ENCODE measurements at regions of chr14 and their contacts with region 1.

Region 1: GRCh38 chr14:25537846-25538455 is 488.0 kb upstream of the STXBP6 start:
- DNase-seq: peak; percentile 31 to 75
- H3K4me3 ChIP-seq: no peak overlapping the region
- H3K27ac ChIP-seq: no peak overlapping the region
- H3K4me1 ChIP-seq: no peaks in the 10 kb centered on the region
- H3K27me3 ChIP-seq: no peaks in the 10 kb centered on the region
- CTCF ChIP-seq: peak; percentile 34 to 81 (median 73)
- EP300 ChIP-seq: no peak
- POLR2A ChIP-seq: no peak
- RAD21 ChIP-seq: peak; percentile 78 to 87

Region 2: DNA sequence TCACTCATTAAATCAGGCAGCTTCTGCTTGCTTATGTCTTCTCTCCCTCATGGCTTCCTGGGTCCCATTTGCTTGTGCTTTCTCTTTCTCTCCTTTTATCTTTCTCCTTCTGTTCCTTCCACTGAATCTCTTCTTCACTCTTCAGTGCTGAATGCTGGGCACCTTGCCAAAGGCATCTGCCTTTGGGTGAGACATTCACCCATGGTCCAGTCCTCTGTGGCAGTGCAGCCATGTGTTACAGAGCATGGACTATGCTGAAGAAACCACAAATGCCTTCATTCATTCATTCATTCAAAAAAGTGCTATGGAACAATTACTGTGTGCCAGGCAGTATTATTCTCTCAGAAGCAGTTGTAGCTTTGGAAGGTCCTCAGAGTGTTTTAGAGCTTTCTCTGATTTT is 143.6 kb before region 1 on chr14:
- CTCF ChIA-PET with region 1: no interaction called
- POLR2A ChIA-PET with region 1: no interaction called
- DNase-seq: no peak
- H3K4me3 ChIP-seq: no peak overlapping the region
- H3K27ac ChIP-seq: no peak overlapping the region
- H3K4me1 ChIP-seq: no peaks in the 10 kb centered on the region; a peak in 1 of 7 replicates
- H3K27me3 ChIP-seq: no peaks in the 10 kb centered on the region
- CTCF ChIP-seq: no peak
- EP300 ChIP-seq: no peak
- POLR2A ChIP-seq: no peak
- RAD21 ChIP-seq: no peak

Region 3: GRCh38 chr14:25431211-25432048 is 106.5 kb before region 1 on chr14:
- CTCF ChIA-PET with region 1: interaction called, 50 read pairs
- POLR2A ChIA-PET with region 1: no interaction called
- DNase-seq: peak; percentile 15 to 65
- H3K4me3 ChIP-seq: no peak overlapping the region
- H3K27ac ChIP-seq: no peak overlapping the region
- H3K4me1 ChIP-seq: no peaks in the 10 kb centered on the region
- H3K27me3 ChIP-seq: no peaks in the 10 kb centered on the region
- CTCF ChIP-seq: peak; percentile 43 to 69 (median 61)
- EP300 ChIP-seq: no peak
- POLR2A ChIP-seq: no peak
- RAD21 ChIP-seq: peak; percentile 72 to 78

Region 4: DNA sequence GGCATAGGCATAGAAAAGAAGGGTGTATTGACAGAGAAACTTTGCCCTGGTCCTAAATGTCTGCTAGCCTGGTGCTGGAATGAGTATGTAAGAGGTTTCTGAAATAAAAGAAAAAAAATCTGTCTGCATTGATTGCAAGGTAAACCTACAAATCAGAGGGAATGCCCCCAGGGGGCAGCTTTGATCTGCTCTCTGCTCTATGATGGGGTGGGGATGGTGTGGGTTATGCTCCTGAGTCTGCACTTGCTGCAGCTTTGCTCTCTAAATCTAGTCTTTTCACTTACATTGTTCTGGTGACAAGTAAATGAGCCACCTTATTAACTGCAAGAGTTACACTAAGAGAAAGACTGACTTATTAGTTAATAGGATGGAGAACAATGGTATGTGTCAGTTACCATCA is 19.6 kb before region 1 on chr14:
- CTCF ChIA-PET with region 1: interaction called, 16 read pairs
- POLR2A ChIA-PET with region 1: no interaction called
- DNase-seq: no peak
- H3K4me3 ChIP-seq: no peak overlapping the region
- H3K27ac ChIP-seq: no peak overlapping the region
- H3K4me1 ChIP-seq: no peaks in the 10 kb centered on the region
- H3K27me3 ChIP-seq: no peaks in the 10 kb centered on the region
- CTCF ChIP-seq: no peak
- EP300 ChIP-seq: no peak
- POLR2A ChIP-seq: no peak
- RAD21 ChIP-seq: peak in 1 of 2 experiments; percentile 17; a peak in 1 of 4 replicates

Region 5: DNA sequence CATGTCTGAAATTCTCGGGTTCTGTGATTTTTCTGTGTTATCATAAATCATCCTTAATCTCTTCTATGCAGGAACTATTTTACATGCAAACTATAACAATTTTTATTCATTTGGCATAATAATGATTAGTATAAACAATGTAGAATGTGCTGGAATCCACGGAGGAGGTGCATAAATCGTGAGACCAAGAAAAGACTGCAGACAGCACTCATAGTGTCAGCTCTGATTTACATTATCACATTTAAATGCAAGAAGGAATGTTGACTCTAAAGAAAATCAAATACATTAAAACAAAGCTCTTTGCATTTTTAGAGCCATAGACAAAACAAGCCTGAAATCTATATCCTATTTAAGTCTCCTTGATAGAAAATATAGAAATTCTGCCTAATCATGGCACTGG is 13.7 kb after region 1 on chr14:
- CTCF ChIA-PET with region 1: interaction called, 43 read pairs
- POLR2A ChIA-PET with region 1: no interaction called
- DNase-seq: no peak
- H3K4me3 ChIP-seq: no peak overlapping the region
- H3K27ac ChIP-seq: no peak overlapping the region
- H3K4me1 ChIP-seq: peaks cover 0 to 2% (median 0%) of the 10 kb centered on the region in 4 experiments; a peak in 1 of 7 replicates
- H3K27me3 ChIP-seq: no peaks in the 10 kb centered on the region
- CTCF ChIP-seq: no peak
- EP300 ChIP-seq: no peak
- POLR2A ChIP-seq: no peak
- RAD21 ChIP-seq: no peak

Region 6: GRCh38 chr14:25658988-25659387 is 121.0 kb after region 1 on chr14:
- CTCF ChIA-PET with region 1: no interaction called
- POLR2A ChIA-PET with region 1: no interaction called
- DNase-seq: no peak
- H3K4me3 ChIP-seq: no peak overlapping the region
- H3K27ac ChIP-seq: no peak overlapping the region
- H3K4me1 ChIP-seq: no peaks in the 10 kb centered on the region
- H3K27me3 ChIP-seq: no peaks in the 10 kb centered on the region
- CTCF ChIP-seq: no peak
- EP300 ChIP-seq: no peak
- POLR2A ChIP-seq: no peak
- RAD21 ChIP-seq: no peak